Activated naive CD4-positive, alpha-beta T cell treated with anti-CD3 and anti-CD28 coated beads for 36 hours (primary cell): ENCODE measurements at regions of chr5 and their contacts with region 1.

Region 1: GRCh38 chr5:132103332-132103951 is 29.9 kb downstream of the CSF2 start:
- DNase-seq: peak; percentile 84
- H3K4me3 Mint-ChIP-seq: no peak overlapping the region
- H3K27ac Mint-ChIP-seq: peak overlapping the region; percentile 73
- H3K4me1 Mint-ChIP-seq: peaks cover 60% of the 10 kb centered on the region
- H3K27me3 Mint-ChIP-seq: no peaks in the 10 kb centered on the region

Region 2: DNA sequence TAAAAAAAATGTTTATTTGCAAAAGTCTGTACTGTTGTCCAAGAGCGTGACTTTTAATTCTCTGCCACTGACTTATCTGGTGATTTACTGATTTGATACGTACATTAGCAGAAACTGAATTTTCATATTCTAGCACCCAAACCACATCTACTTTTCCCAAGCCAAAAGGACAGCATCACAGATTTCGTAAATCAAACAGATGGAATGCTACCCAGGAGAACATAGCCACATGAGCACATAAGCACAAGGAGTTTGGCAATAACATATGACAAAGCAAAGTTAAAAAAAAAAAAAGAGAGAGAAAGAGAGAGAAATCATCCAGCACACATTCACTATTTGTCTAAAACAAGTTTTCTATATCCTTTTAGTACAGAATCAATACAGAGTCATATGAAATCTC is 1022.1 kb before region 1 on chr5:
- CTCF ChIA-PET with region 1: no interaction called
- intact Hi-C with region 1: loop called (anchors 10 kb)
- DNase-seq: no peak
- H3K4me3 Mint-ChIP-seq: no peak overlapping the region
- H3K27ac Mint-ChIP-seq: no peak overlapping the region
- H3K4me1 Mint-ChIP-seq: peaks cover 18% of the 10 kb centered on the region
- H3K27me3 Mint-ChIP-seq: no peaks in the 10 kb centered on the region

Region 3: GRCh38 chr5:131536211-131536826 is 567.1 kb before region 1 on chr5:
- CTCF ChIA-PET with region 1: no interaction called
- intact Hi-C with region 1: loop called (anchors 2 kb)
- DNase-seq: peak; percentile 39
- H3K4me3 Mint-ChIP-seq: peak overlapping the region; percentile 49
- H3K27ac Mint-ChIP-seq: peak overlapping the region; percentile 80
- H3K4me1 Mint-ChIP-seq: peaks cover 81% of the 10 kb centered on the region
- H3K27me3 Mint-ChIP-seq: no peaks in the 10 kb centered on the region

Region 4: GRCh38 chr5:132064738-132065331 is 38.6 kb before region 1 on chr5:
- CTCF ChIA-PET with region 1: interaction called, 7 read pairs
- intact Hi-C with region 1: loop called (anchors 1 kb)
- DNase-seq: peak; percentile 91
- H3K4me3 Mint-ChIP-seq: no peak overlapping the region
- H3K27ac Mint-ChIP-seq: no peak overlapping the region
- H3K4me1 Mint-ChIP-seq: peaks cover 13% of the 10 kb centered on the region
- H3K27me3 Mint-ChIP-seq: no peaks in the 10 kb centered on the region

Region 5: DNA sequence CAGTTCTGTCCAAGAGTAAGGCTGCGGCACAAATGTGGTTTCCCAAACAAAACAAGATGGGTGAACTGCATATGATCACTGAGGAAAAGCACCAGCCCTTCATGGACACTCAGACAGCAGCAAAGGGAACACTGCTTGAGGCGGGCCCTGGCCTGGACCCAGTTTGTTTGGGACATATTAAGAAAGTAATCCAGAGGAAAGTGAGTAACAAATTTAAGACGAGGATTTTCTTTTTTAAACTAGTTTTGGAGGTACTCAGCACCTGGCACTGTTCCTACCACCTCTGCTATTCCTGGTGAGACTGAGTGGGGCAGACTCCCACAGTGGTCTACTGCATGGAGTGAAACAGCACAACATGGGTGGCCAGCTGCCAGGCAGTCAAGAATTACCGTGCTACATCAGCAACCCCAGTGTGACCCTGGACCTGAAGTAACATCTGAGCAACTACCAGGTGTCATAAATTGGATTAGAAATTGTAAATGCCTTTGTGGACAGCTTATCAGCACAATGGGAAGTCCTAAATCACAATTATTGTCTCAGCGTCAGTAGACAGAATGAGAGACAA is 95.8 kb after region 1 on chr5:
- CTCF ChIA-PET with region 1: no interaction called
- intact Hi-C with region 1: no loop called
- DNase-seq: no peak
- H3K4me3 Mint-ChIP-seq: no peak overlapping the region
- H3K27ac Mint-ChIP-seq: no peak overlapping the region
- H3K4me1 Mint-ChIP-seq: no peaks in the 10 kb centered on the region
- H3K27me3 Mint-ChIP-seq: peaks cover 2% of the 10 kb centered on the region

Region 6: DNA sequence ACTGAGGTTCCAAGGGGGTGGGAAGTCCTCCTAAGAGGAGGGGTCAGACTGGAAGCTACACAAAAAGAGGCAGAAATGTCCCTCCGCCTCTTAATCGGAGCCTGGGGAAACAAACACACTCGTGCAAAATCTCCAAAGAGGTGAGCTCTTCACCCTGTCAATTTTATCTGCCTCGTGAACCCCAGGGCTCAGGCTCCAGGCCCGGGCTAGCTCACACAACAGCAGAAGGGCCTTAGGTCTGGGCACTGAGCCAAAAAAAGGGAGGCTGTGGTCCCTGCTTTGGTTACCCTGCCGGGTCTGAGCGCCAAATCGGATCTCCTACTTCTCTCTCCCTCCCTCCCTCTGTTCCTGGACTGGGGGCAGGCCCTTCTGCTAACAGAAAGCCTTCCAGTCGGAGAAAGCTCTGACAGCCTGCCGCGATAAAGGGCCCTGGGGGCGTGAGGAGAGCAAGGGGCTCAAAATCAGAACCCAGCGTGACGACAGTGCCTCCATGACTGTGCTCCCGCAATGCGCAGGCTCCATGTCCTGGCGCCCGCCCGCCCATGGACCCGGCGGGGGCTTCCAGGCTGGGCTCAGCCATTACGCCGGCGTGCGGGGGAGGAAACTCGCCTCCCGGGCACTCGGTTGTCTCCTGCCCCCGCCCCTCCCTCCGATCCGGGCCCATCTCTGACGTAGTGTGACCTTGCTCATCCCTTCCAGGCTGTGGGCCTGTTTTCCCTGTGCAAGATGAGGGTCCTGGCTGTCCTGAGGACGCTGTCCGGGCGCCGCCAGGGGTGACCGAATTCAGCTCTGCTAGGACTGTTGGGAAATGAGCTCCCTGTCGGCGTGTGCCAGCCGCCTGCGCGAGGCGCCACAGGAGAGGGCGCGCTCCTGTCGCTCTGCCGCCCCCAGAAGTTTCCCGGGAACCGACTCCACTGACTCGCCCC is 189.9 kb after region 1 on chr5:
- CTCF ChIA-PET with region 1: no interaction called
- intact Hi-C with region 1: loop called (anchors 1 kb)
- DNase-seq: peak; percentile 92
- H3K4me3 Mint-ChIP-seq: peak overlapping the region; percentile 92
- H3K27ac Mint-ChIP-seq: peak overlapping the region; percentile 89
- H3K4me1 Mint-ChIP-seq: peaks cover 23% of the 10 kb centered on the region
- H3K27me3 Mint-ChIP-seq: peaks cover 14% of the 10 kb centered on the region

Region 7: DNA sequence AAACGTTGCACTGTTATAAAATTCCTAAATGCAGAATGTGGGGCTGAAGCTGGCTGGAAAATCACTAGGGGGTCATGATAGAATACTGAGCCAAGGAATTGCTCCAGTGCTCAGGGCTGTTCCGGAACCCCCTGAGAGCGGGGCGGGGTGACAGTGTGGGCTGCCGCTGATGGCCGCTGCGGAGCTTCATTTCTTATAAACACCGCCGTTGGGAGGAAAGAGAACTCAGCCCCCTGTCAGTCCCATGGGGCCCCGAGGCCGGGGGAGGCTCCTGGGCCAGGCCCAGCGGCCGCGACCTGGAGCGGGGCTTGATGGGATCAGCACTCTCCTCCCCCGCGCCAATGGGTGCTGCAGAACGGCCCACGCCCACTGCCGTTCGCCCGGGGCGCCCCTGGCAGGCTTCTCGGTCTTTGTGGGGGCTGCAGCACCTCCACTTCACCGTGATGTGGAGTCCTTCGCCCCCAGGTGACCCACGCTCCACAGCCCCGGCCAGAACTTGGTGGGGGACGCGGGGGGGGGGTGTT is 392.3 kb after region 1 on chr5:
- CTCF ChIA-PET with region 1: no interaction called
- intact Hi-C with region 1: loop called (anchors 1 kb)
- DNase-seq: peak; percentile 79
- H3K4me3 Mint-ChIP-seq: peak overlapping the region; percentile 84
- H3K27ac Mint-ChIP-seq: peak overlapping the region; percentile 91
- H3K4me1 Mint-ChIP-seq: peaks cover 56% of the 10 kb centered on the region
- H3K27me3 Mint-ChIP-seq: no peaks in the 10 kb centered on the region